A549 (cell line): ENCODE measurements at regions of chr13 and their contacts with region 1.

Region 1: DNA sequence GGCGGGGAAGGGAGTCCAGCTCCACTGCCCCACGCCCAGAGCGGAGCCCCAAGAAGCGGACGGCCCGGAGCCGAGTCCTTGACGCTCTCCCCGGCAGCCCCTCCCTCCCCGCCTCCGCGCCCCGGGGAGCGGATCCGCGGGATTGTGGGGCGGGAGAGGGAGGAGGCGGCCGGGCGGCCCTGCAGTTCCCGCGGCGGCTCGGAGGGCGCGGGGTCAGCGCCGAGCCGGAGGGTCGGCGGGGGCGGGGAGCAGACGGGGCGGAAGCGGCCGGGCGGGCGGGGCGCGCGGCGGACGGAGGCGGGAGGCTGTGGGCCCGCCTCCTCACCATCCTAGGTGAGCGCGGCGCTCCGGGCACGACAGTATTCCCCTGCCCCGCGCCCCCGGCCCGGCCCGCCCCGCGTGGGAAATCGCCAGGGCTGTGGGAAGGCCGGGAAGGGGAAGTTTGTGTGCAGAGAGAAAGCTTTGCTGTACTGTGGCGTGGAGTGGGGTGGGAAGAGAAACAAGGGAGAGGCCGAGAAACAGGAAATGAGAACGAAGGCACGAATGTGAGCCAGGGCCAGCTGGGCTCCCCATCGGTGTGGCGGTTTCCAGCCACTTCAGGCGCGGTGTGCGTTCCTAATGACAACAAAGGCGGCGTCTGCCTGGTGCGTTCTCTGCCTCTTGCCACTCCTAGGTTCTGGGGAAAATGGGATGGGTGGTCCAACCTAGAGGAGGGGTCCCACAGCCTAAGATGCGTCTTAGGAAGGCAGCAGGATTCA is 1.3 kb upstream of the KLF12 start:
- DNase-seq: peak; percentile 33 to 62
- ATAC-seq: peak; percentile 72 to 77
- H3K4me3 ChIP-seq: peak overlapping the region; percentile 91
- H3K27ac ChIP-seq: peak overlapping the region; percentile 94 to 98
- H3K4me1 ChIP-seq: peaks cover 6% of the 10 kb centered on the region; the same call in 1 of the 3 replicates
- CTCF ChIP-seq: no peak
- EP300 ChIP-seq: no peak
- POLR2A ChIP-seq: peak; percentile 35; the same call in 1 of the 2 replicates
- RAD21 ChIP-seq: no peak

Region 2: DNA sequence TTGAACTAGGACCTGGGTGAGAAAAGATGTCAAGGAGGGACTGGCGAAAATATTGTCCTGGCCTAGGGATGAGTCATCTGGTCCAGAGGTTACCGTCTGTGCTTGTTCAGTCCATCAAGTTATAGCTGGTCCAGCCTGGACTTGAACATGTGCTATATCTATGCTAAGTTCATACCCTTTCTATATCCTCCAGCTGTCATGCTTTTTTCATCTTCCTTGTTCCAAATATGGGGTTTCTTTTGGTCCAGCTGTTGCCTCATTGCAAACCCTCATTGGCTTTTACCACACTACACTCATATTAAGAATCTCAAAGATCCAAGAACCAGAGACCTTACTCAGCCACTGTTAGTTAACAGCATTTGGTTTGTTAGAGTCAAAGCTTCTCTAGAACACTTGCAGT is 17.8 kb after region 1 on chr13:
- CTCF ChIA-PET with region 1: no interaction called
- POLR2A ChIA-PET with region 1: no interaction called
- DNase-seq: no peak
- ATAC-seq: no peak
- H3K4me3 ChIP-seq: no peak overlapping the region
- H3K27ac ChIP-seq: no peak overlapping the region
- H3K4me1 ChIP-seq: no peaks in the 10 kb centered on the region
- CTCF ChIP-seq: no peak
- EP300 ChIP-seq: no peak
- POLR2A ChIP-seq: no peak
- RAD21 ChIP-seq: no peak

Region 3: DNA sequence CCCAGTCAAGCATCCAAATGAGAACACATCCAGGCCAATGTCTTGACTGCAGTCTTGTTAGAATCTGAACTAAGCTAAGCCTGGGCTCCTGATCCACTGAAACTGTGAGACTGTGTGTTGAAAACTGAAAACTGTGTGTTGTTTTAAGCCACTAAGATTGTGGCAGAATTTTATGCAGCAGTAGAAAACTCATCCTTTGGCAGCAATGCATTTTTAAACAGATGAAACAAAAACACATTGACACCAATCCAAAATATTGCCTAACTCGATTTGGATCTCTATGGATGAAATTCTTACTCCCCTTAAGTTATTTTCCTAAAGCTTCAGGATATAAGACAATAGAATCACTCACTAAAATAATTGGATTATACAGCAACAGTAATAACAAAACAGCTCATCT is 201.0 kb after region 1 on chr13:
- CTCF ChIA-PET with region 1: no interaction called
- POLR2A ChIA-PET with region 1: interaction called, 11 read pairs
- DNase-seq: no peak
- ATAC-seq: no peak
- H3K4me3 ChIP-seq: no peak overlapping the region
- H3K27ac ChIP-seq: no peak overlapping the region
- H3K4me1 ChIP-seq: no peaks in the 10 kb centered on the region
- CTCF ChIP-seq: no peak
- EP300 ChIP-seq: no peak
- POLR2A ChIP-seq: no peak
- RAD21 ChIP-seq: no peak